Right lobe of liver (tissue), 6 donors: ENCODE measurements at regions of chr14 and their contacts with region 1.

Region 1: DNA sequence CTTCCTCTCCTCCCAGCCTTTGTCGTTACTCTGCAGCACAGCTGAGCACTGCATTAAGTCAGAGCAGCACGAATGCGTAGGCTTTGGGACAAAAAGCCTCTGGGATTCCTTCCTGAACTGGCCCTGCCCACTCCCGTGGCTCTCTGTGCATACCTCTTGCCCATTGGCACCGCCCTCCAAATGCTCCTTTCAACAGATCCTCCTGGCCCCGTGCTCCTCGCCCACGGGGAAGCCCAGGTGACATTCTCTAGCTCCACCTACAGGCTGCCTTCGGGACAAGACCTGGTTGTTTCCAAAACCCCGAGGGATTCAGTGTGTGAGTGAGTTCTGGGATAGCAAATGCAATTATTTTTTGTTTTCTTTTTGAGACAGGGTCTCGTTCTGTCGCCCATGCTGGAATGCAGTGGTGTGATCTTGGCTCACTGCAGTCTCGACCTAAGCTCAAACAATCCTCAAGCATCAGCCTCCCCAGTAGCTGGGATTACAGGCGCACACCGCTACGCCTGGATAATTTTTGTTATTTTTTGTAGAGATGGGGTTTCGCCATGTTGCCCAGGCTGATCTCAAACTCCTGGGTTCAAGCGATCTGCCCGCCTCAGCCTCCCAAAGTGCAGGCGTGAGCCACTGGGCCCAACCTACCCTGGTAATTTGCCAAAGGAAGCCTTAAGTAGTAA is 17.9 kb upstream of the TDRD9 start:
- DNase-seq: peak; percentile 89 to 94 (median 90)
- ATAC-seq: peak; percentile 99 to 100 (median 100)
- H3K4me3 ChIP-seq: no peak overlapping the region
- H3K27ac ChIP-seq: no peak overlapping the region
- H3K4me1 ChIP-seq: peaks cover 0 to 11% (median 3%) of the 10 kb centered on the region in 4 donors
- H3K27me3 ChIP-seq: no peaks in the 10 kb centered on the region
- CTCF ChIP-seq: peak; percentile 81 to 89 (median 89)
- POLR2A ChIP-seq: no peak

Region 2: DNA sequence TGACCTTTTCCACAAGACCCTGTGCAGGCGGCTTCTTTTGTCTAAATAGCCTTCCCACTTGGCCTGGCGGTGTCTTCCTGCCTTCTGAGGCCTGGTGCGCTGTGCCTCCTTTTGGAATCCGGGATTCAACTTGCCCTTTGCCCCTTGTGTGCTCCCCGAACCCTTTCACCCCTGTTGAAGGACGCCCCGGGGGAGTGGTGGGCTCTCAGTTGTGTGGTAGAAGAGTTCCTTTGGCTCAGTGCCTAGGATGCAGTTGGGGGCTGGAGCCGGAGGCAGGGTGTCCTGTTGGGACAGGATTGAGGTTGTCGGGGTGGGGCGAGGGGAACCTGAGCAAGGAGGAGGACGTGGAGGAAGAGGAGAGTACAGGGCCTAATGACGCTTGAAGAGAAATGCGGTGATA is 246.9 kb before region 1 on chr14:
- intact Hi-C with region 1: no loop called
- DNase-seq: no peak
- ATAC-seq: peak in 1 of 4 donors; percentile 13
- H3K4me3 ChIP-seq: no peak overlapping the region
- H3K27ac ChIP-seq: peak overlapping the region; percentile 20 to 37 (median 21)
- H3K4me1 ChIP-seq: no peaks in the 10 kb centered on the region
- H3K27me3 ChIP-seq: no peaks in the 10 kb centered on the region
- CTCF ChIP-seq: no peak
- POLR2A ChIP-seq: no peak

Region 3: DNA sequence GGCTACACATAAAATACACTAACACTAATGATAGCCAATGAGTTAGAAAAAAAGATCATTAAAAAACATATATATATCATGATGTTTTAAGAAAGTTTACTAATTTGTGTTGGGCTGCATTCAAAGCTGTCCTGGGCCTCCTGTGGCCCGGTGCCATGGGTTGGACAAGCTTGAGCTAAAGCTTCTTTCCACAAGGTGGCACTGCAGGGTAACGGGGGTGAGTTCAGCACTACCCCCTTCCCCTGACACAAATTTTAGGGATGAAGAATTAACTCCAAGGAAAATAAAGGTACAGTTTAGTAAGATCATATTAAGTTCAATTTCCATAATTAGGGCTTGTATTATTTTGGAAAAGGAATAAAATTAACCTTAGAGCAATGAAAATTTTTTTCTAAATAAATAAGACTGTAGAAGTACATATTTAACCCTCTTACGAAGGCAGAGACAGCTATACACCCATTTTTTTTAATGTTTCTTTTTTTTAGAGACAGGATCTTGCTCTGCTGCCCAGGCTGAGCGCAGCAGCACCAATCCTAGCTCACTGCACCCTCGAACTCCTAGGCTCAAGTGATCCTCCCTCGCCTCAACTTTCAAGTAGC is 101.9 kb before region 1 on chr14:
- intact Hi-C with region 1: loop called (anchors 5 to 10 kb)
- DNase-seq: peak; percentile 73 to 85 (median 74)
- ATAC-seq: peak; percentile 94 to 98 (median 96)
- H3K4me3 ChIP-seq: no peak overlapping the region
- H3K27ac ChIP-seq: no peak overlapping the region
- H3K4me1 ChIP-seq: no peaks in the 10 kb centered on the region
- H3K27me3 ChIP-seq: no peaks in the 10 kb centered on the region
- CTCF ChIP-seq: peak; percentile 89 to 97 (median 95)
- POLR2A ChIP-seq: no peak